Right cardiac atrium (tissue), 5 donors: ENCODE measurements at regions of chr6 and their contacts with region 1.

Region 1: GRCh38 chr6:152206072-152206818 is 398.8 kb downstream of the ESR1 start:
- DNase-seq: peak; percentile 34 to 69 (median 63)
- ATAC-seq: no peak
- H3K4me3 ChIP-seq: no peak overlapping the region
- H3K27ac ChIP-seq: no peak overlapping the region
- H3K4me1 ChIP-seq: no peaks in the 10 kb centered on the region
- H3K27me3 ChIP-seq: no peaks in the 10 kb centered on the region

Region 2: DNA sequence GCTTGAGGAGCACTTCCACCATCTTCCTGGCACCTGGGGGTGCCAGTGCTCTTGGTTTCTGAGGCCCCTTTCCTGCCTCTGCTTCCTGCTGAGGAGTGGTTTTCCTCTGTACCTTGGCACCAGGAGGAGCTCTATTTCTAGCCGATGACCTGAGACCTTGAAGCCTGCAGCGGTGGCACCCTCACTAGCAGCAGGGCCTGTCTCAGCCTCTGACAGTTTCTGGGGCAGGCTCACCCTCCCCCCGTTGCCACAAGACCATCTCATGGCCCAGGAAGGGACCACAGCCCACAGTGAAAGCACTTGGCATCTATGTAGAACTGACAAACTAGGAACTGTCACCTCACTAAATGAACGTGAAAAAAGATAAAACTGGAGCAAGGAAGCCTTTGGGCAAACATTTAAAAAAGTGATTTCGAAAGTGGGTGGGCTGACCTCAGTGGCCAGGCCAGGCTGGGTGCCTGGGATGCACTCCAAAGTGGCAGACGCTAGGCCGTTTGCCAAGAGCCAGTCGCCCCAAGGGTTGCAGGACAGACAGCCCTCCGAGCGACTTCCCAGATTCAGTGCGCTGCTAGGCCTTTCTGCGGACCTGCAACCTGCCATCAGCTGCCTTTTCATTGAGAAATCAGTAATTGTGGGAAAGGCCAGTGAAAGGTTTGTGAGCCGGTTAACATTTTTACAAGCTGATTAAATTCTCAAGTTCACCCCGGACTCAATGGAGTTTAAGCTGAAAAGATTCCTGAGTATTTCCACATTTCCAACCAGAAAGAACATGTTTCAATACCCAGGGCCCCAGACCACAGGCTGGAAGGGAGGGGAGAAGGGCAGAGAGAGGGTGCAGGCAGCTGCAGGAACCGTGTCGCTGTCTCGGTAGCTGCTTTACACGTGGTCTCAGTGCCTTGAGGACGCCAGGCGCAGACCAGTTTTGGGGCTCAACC is 95.1 kb before region 1 on chr6:
- intact Hi-C with region 1: no loop called
- DNase-seq: peak; percentile 41 to 85 (median 72)
- ATAC-seq: peak; percentile 73 to 80
- H3K4me3 ChIP-seq: no peak overlapping the region
- H3K27ac ChIP-seq: peak overlapping the region; percentile 46
- H3K4me1 ChIP-seq: peaks cover 7% of the 10 kb centered on the region
- H3K27me3 ChIP-seq: no peaks in the 10 kb centered on the region

Region 3: GRCh38 chr6:152151920-152152319 is 54.3 kb before region 1 on chr6:
- intact Hi-C with region 1: loop called in 1 of 4 experiments (anchors 10 kb)
- DNase-seq: no peak
- ATAC-seq: no peak
- H3K4me3 ChIP-seq: no peak overlapping the region
- H3K27ac ChIP-seq: no peak overlapping the region
- H3K4me1 ChIP-seq: peaks cover 2% of the 10 kb centered on the region
- H3K27me3 ChIP-seq: no peaks in the 10 kb centered on the region